WTC11 (cell line): ENCODE measurements at regions of chr10 and their contacts with region 1.

Region 1: GRCh38 chr10:67079126-67079525 is 153.3 kb downstream of the LRRTM3 start:
- DNase-seq: no peak
- ATAC-seq: no peak
- H3K4me3 Mint-ChIP-seq: no peak overlapping the region
- H3K27ac Mint-ChIP-seq: no peak overlapping the region
- H3K4me1 Mint-ChIP-seq: no peaks in the 10 kb centered on the region
- H3K27me3 Mint-ChIP-seq: no peaks in the 10 kb centered on the region
- CTCF ChIP-seq: no peak

Region 2: DNA sequence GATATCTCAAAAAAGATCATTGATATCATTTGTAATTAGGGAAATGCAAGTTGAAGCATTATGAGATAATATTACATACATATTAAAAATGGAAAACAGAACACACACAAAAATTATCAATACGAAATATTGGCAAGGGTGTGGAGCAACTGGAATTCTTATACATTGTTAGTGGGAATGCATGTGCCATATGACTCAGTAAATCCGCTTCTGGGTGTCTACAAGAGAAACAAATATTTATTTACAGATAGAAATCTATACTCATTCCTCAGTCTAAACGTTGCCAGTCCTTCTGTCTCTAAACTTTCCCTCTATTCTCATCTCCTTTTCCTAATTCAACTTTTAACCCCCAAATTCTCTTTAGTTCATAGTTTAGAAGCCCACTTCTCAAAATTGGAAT is 323.7 kb before region 1 on chr10:
- CTCF ChIA-PET with region 1: no interaction called
- POLR2A ChIA-PET with region 1: interaction called, 13 read pairs
- DNase-seq: no peak
- ATAC-seq: no peak
- H3K4me3 Mint-ChIP-seq: no peak overlapping the region
- H3K27ac Mint-ChIP-seq: no peak overlapping the region
- H3K4me1 Mint-ChIP-seq: 0 out of 2 replicates have a peak, but pooled peaks cover 3% of the 10 kb centered on the region
- H3K27me3 Mint-ChIP-seq: no peaks in the 10 kb centered on the region
- CTCF ChIP-seq: no peak